ENCODE measurements at regions of chr6 and their contacts with region 1.

Region 1: DNA sequence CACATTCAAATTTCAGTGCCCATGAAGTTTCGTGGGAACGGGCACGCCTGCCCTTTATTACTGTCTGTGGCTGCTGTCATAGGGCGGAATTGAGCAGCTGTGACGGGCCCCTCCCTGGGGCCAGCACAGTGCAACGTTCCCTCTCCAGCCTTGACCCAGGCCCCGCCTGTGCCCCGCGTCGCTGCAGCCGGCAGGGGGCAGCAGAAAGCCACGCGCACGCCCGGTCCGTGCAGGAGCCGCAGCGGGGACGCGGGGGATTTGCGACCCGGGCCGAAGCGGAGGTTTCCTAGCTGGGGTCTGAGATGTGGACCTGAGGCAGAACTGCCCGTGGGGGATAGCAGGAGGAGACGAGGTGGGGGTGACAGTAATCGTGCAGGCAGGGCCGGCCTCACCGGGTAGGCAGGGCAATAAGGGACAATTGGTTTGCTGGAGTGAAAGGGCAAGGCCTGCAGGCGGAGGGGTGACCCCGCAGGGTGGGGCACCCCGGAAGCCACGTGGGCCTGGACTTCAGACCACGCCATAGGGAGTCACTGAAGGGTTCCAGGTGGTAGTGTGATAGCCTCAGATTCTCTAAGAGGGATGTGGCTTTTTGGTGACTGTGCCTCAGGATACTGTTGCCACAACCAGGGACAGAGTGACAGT is 54.4 kb downstream of the SYTL3 start:
- DNase-seq: peak in 1 of 2 donors; percentile 88
- H3K4me3 ChIP-seq: peak overlapping the region; percentile 45 to 61
- H3K27ac ChIP-seq: peak overlapping the region; percentile 39 to 47
- H3K4me1 ChIP-seq: peaks cover 9 to 28% of the 10 kb centered on the region in 2 donors
- H3K27me3 ChIP-seq: no peaks in the 10 kb centered on the region
- CTCF ChIP-seq: peak; percentile 94 to 100 (median 99)

Region 2: GRCh38 chr6:158762787-158763433 is 58.6 kb after region 1 on chr6:
- intact Hi-C with region 1: loop called (anchors 5 kb)
- DNase-seq: peak in 1 of 2 donors; percentile 66
- H3K4me3 ChIP-seq: no peak overlapping the region
- H3K27ac ChIP-seq: peak overlapping the region; percentile 60 to 61
- H3K4me1 ChIP-seq: peaks cover 0 to 5% of the 10 kb centered on the region in 2 donors
- H3K27me3 ChIP-seq: no peaks in the 10 kb centered on the region
- CTCF ChIP-seq: no peak

Region 3: GRCh38 chr6:158772851-158773371 is 68.6 kb after region 1 on chr6:
- intact Hi-C with region 1: no loop called
- DNase-seq: no peak
- H3K4me3 ChIP-seq: no peak overlapping the region
- H3K27ac ChIP-seq: no peak overlapping the region
- H3K4me1 ChIP-seq: no peaks in the 10 kb centered on the region
- H3K27me3 ChIP-seq: no peaks in the 10 kb centered on the region
- CTCF ChIP-seq: no peak

Region 4: DNA sequence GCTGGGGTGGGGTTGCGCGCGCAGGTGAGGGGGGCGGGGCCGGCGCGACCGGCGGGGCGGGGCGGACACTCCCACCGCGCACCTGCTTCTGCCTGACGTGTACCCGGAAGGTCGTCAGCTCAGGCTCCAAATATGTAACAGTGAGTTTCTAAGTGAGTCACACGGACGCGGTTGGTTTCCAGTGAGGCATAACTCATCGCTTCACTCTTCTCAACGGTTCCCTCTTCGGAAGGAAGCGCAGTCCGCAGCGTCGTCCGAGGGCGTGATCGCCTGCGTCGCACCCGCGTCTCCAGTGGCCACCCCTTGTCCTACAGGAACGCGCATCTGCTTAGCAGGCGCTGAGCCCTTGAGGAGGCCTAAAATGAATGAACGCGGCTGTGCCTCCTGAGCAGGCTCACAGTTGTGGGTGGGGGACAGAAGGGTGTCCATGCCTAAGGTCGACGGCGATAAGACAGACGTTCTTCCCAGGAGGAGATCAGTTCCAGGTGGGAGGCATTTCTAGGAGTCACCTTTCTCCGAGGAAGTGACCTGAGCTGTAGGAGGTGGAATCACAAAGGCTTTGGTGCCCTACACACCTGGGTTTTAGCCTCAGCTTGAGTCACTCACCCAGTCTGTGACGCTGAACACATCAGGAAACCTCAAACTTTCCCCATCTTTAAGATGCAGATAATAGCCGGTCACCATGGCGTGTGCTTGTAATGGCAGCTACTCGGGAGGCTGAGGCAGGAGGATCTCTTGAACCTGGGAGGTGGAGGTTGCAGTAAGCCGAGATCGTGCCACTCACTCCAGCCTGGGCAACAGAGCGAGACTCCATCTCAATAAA is 165.7 kb after region 1 on chr6:
- intact Hi-C with region 1: loop called (anchors 5 kb)
- DNase-seq: peak; percentile 72 to 90
- H3K4me3 ChIP-seq: peak overlapping the region; percentile 52 to 59
- H3K27ac ChIP-seq: peak overlapping the region; percentile 47 to 55
- H3K4me1 ChIP-seq: no peaks in the 10 kb centered on the region
- H3K27me3 ChIP-seq: no peaks in the 10 kb centered on the region
- CTCF ChIP-seq: no peak

Region 5: DNA sequence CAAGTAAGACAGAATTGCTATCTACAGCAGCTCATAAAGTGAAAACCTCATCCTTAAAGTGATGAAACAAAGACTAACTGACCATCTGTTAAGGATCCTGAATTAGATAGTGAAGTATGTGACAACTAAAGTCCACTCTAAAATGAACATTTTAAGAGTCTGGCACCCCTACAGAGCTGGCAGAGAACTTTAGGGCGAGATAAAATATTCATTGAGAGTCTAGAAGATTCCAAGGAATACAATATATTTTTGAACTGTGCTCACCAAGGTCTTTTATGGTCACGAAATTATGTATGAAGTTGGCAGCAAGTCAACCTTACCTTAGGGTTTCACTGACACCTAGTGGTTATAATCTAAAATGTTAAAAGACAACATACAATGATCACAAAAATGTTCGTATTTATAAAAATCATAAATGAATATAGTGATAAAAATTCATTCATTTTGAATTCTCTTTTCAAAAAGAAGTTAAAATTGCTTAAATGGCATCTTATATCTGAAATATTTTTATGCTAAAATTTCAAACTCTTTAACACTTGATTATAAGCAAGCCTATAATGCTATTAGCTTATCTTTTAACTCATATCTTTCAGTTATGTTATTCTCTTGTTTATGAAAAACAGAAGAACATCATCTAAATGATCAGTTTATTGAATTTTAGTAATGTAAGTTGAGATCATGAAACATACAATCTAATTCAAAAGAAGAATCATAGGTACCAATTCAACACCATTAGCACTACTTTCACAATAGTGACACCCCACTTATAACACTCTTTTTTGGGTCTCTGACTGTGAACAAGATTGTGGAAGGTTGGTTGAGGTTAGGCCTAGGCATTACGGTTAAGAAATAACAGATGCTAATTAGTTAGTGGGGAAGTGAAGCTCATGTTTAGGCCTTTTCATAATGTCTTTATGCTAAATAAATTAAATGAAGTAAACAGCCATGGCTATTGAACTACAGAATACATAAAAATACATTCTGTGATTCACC is 268.2 kb after region 1 on chr6:
- intact Hi-C with region 1: loop called (anchors 2 kb)
- DNase-seq: no peak
- H3K4me3 ChIP-seq: no peak overlapping the region
- H3K27ac ChIP-seq: no peak overlapping the region
- H3K4me1 ChIP-seq: no peaks in the 10 kb centered on the region
- H3K27me3 ChIP-seq: no peaks in the 10 kb centered on the region
- CTCF ChIP-seq: peak; percentile 30 to 43 (median 36)

Region 6: DNA sequence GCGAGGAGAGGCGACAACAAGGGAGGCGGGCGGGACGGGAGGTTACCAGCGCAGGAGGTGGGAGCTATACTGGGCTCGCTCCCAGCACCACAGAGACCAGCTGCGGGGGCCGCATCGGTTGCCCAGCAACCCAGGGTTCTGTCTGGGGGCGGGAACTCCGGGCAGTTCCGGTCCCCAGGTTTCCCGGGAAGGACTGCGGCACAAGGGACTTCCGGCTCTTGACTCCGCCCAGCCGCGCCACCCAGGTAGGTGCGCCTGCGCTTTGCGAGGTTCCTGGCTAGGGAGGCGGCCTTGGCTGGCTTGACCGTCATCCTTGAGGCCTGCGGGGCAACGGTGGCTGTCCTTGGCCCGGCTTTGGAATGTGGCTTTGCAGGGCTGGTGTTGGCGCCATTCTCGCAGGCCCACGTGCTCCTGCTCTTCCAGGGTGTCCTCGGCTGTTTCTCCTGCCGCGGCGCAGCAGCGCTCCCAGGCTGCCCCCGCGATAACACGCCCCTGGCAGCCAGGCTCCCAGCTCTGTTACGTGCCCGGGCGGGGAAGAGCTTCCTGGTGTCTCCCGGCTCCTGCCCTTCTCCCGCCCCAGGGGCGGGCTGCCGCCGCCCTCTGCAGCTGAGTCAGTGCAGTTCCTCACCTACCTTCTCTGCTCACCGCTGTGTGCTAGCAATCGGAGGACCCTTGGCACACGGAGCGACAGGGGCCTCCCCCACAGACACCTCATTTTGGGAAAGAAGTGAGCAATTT is 295.5 kb after region 1 on chr6 and contains the start of gene RSPH3:
- intact Hi-C with region 1: loop called (anchors 5 kb)
- DNase-seq: peak; percentile 51 to 94
- H3K4me3 ChIP-seq: peak within 1 kb of the TSS; percentile 66 to 83
- H3K27ac ChIP-seq: peak within 1 kb of the TSS; percentile 57 to 61
- H3K4me1 ChIP-seq: peaks cover 0 to 2% of the 10 kb centered on the region in 2 donors
- H3K27me3 ChIP-seq: no peaks in the 10 kb centered on the region
- CTCF ChIP-seq: peak in 1 of 3 experiments; percentile 29
- total RNA-seq, gene RSPH3: 8.8 TPM

Region 7: GRCh38 chr6:159104163-159104925 is 400.0 kb after region 1 on chr6:
- intact Hi-C with region 1: loop called (anchors 1 kb)
- DNase-seq: no peak
- H3K4me3 ChIP-seq: no peak overlapping the region
- H3K27ac ChIP-seq: no peak overlapping the region
- H3K4me1 ChIP-seq: no peaks in the 10 kb centered on the region
- H3K27me3 ChIP-seq: no peaks in the 10 kb centered on the region
- CTCF ChIP-seq: peak; percentile 58 to 78 (median 60)